ENCODE measurements at regions of chr2 and their contacts with region 1.

Region 1: GRCh38 chr2:186503848-186504606 is 18.0 kb downstream of the ZC3H15 start:
- DNase-seq: no peak
- H3K4me3 ChIP-seq: no peak overlapping the region
- H3K27ac ChIP-seq: no peak overlapping the region
- H3K4me1 ChIP-seq: peaks cover 0 to 7% (median 0%) of the 10 kb centered on the region in 4 donors
- H3K27me3 ChIP-seq: no peaks in the 10 kb centered on the region
- CTCF ChIP-seq: peak; percentile 25 to 62 (median 38)
- EP300 ChIP-seq: no peak
- POLR2A ChIP-seq: no peak

Region 2: DNA sequence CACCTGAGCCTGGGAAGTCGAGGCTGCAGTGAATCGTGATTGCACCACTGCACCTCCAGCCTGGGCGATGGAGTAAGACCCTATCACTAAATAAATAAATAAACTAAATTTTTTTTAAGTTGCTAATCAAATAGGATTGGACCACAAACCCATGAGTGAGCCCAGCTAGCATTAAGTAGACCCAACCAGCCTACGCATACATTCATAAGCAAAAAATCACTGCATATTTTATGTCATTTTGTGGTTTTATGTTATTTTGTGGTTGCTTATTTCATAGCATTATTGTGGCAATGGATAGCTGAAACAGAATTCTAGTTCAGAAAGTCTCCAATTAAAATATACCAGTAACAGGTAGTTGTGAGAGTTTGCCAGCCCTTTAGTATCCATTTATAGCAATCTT is 47.1 kb before region 1 on chr2:
- intact Hi-C with region 1: no loop called
- DNase-seq: no peak
- H3K4me3 ChIP-seq: no peak overlapping the region
- H3K27ac ChIP-seq: no peak overlapping the region
- H3K4me1 ChIP-seq: no peaks in the 10 kb centered on the region
- H3K27me3 ChIP-seq: no peaks in the 10 kb centered on the region
- CTCF ChIP-seq: no peak
- EP300 ChIP-seq: no peak
- POLR2A ChIP-seq: no peak

Region 3: DNA sequence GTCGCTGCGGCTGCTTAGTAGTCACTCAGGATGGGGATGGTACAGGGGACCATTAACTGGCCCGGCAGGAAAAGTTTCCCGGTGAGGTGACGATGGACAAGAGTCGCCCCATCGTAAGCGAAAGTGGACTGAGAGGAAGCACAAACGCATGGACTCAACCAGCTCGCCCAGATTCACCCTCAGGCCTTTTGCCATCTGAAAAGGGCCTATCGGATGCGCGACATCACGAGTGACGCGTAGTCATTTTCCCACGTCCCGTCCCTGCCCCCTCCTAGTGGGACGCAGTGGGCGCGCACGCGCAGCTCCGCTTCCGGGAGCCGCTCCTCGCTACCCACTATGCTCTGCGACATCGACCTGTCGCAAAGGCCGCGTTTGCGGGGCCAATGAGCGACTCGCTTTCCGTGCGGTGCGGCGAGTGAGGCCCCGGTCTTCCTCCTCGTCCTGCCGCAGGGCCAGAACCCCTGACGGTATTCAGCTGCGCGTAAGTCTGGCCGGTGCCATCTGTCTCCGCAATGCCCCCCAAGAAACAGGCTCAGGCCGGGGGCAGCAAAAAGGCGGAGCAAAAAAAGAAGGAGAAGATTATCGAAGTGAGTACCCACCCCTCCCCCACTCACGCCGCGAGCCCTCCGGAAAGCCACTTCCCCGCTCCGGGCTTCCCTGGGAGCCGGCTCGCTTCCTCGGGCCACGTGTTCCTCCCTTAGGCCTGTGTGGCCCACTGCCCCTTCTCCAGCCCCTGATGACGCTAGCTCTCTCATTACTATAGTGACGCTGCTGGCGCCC is 18.0 kb before region 1 on chr2 and contains the start of gene ZC3H15:
- intact Hi-C with region 1: no loop called
- DNase-seq: peak; percentile 99
- H3K4me3 ChIP-seq: peak within 1 kb of the TSS; percentile 61 to 95 (median 85)
- H3K27ac ChIP-seq: peak within 1 kb of the TSS; percentile 91 to 95 (median 92)
- H3K4me1 ChIP-seq: peaks cover 0 to 54% (median 36%) of the 10 kb centered on the region in 4 donors
- H3K27me3 ChIP-seq: no peaks in the 10 kb centered on the region
- CTCF ChIP-seq: no peak
- EP300 ChIP-seq: peak in 2 of 4 donors; percentile 3 to 87
- POLR2A ChIP-seq: peak; percentile 73 to 80
- total RNA-seq, gene ZC3H15: 60.3 to 76.7 (median 62.0) TPM

Region 4: DNA sequence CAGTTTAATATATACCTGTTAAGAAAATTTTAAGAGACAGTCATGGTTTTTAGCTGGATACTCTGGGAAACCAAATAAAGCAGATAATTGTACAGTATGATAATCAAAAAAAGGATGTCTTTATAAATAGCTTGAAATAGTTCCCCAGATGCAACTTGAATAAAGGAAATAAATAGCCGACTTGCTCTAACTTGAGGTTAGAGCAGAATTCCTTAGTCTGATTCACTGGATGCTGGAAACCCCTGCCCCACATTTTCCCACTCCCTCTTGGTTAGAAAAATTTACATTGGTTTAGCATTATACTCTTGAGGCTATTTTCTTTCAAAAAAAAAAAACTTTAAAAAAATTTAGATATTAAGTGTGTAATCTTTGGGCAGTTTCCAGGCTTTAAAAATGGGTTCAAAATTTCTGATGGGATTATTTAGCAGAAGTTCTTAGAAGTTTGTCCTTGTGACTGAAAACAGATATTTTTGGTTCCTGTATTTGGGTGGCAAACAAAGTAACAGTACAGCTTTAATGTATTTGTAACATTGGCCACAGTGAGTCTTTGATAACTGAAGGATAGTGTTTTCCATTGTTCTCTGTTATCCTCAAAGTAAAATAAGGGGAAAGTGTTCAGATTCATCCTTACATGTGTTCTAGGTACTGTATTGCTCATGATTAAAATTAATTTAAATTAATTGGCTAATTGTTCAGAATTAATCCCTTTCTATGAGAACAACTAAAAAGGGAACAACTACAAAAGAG is 125.4 kb after region 1 on chr2:
- intact Hi-C with region 1: no loop called
- DNase-seq: no peak
- H3K4me3 ChIP-seq: no peak overlapping the region
- H3K27ac ChIP-seq: no peak overlapping the region
- H3K4me1 ChIP-seq: no peaks in the 10 kb centered on the region
- H3K27me3 ChIP-seq: no peaks in the 10 kb centered on the region
- CTCF ChIP-seq: no peak
- EP300 ChIP-seq: no peak
- POLR2A ChIP-seq: no peak

Region 5: GRCh38 chr2:186641807-186642321 is 137.8 kb after region 1 on chr2:
- intact Hi-C with region 1: loop called (anchors 1 kb)
- DNase-seq: no peak
- H3K4me3 ChIP-seq: no peak overlapping the region
- H3K27ac ChIP-seq: no peak overlapping the region
- H3K4me1 ChIP-seq: no peaks in the 10 kb centered on the region
- H3K27me3 ChIP-seq: no peaks in the 10 kb centered on the region
- CTCF ChIP-seq: peak in 3 of 4 experiments; percentile 39 to 69 (median 42)
- EP300 ChIP-seq: no peak
- POLR2A ChIP-seq: no peak